ENCODE measurements at regions of chr2 and their contacts with region 1.

Region 1: DNA sequence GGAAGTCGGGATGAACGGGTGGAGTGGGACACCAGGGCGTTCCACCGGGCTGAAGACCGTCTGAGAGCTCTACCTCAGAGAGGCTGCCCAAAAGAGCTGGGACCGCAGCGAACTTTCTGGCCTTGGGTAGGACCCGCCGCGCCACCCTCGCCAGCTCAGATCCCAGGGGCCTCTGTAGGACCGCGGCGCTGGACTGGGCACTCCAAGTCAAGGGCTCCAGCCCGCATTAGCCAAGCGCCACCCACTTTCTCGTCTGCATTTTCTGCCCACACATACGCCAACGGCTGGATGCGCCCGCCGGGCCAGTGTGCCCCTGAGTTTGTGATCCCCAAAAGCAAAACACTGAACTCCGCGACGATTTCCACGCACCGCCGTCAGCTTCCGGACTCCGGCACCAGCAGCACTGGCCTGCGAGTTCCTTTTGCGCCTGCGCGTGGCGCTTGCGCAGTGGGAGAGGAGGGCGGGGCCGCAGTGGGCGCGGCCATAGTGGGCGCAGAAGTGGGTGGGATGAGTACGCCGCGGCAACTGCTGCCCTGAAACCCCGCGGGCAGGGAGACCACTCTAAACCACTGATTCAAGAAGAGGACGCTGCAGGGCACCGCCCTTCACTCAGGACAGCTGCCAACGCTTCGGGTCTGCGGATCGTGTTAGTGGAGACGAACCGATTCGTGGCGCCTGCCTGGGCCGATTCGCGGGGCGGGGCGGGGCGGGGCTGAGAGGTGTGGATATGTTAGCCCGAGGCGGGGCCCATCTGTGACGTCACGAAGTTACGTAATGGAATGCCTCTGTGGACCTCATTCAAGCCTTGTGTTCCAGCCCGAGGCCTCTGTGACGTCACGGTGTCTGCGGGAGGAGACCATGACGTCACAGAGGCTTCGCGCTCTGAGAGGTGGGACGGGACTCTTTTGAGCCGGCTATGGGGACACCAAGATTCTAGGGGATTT is 10.5 kb downstream of the OSR1 start:
- DNase-seq: peak; percentile 96
- H3K4me3 Mint-ChIP-seq: peak overlapping the region; percentile 91
- H3K27ac Mint-ChIP-seq: peak overlapping the region; percentile 91
- H3K4me1 Mint-ChIP-seq: peaks cover 21% of the 10 kb centered on the region
- H3K27me3 Mint-ChIP-seq: peaks cover 38% of the 10 kb centered on the region

Region 2: DNA sequence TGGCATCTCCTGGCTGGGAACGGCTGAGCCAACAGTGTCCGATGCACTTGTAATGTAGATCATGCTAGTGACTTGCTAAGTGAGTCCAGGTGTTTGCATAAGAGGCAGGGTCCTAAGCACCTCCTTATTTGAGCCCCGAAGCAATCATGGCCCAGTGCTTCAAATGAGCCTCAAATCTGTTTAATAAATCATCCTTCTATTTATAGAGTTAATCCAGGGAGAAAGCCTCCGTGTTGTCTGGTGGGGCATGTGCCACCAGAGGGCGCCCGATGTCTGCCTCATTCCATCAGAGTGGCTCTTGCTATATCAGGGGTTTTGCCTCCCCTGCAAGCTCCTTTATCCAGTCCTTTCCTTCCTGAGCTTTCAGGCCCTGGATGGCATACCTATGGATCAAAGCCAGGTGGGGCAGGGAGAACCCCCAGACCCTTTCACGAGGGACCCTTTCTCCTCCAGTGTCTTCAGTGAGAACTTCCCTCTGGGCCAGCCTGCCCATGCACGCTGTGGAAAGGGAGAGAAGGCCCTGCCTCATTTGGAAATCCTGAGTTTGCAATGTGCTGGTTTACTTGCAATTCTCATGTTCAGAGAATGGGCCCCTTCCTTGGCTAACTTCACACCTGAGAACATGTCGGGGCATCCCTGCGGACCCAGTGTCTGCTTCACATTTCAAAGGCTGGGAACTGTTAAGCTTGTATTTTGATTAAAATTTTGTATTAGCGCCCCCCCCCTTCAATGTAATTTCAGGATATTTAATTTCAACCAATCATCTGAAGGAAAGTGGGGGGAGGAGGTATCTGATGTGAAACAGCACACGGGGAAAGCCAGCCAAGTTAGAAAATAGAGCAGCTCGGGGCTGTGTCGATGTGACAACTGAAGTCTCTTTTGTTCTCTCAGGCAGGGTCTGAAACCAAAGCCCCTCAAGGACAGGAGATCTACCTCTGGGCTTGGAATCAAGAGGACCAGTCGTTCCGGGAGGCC is 827.2 kb before region 1 on chr2:
- CTCF ChIA-PET with region 1: no interaction called
- POLR2A ChIA-PET with region 1: no interaction called
- intact Hi-C with region 1: loop called (anchors 5 kb)
- DNase-seq: peak; percentile 77
- H3K4me3 Mint-ChIP-seq: no peak overlapping the region
- H3K27ac Mint-ChIP-seq: no peak overlapping the region
- H3K4me1 Mint-ChIP-seq: no peaks in the 10 kb centered on the region
- H3K27me3 Mint-ChIP-seq: peaks cover 21% of the 10 kb centered on the region

Region 3: GRCh38 chr2:19216676-19217602 is 131.0 kb before region 1 on chr2:
- CTCF ChIA-PET with region 1: no interaction called
- POLR2A ChIA-PET with region 1: no interaction called
- intact Hi-C with region 1: loop called (anchors 10 kb)
- DNase-seq: no peak
- H3K4me3 Mint-ChIP-seq: no peak overlapping the region
- H3K27ac Mint-ChIP-seq: no peak overlapping the region
- H3K4me1 Mint-ChIP-seq: no peaks in the 10 kb centered on the region
- H3K27me3 Mint-ChIP-seq: peaks cover 5% of the 10 kb centered on the region

Region 4: DNA sequence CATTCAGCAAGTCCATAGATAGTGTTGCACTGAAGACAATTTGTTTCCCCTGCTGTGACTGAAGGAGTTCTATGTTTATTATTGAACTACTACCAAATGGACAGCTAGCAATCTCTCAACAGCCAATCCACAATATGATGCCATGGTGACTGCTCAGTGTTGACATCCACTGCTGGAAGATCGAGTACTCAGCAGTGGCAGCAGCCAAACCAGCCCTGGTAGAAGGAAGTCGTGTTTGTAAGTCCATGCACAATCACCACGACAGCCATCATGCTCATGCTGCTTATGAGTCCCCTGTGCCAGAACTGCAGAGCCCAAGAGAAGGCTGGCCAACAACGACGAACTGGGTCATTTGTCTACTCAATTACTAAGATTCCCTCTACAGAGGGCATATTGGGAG is 55.9 kb before region 1 on chr2:
- CTCF ChIA-PET with region 1: no interaction called
- POLR2A ChIA-PET with region 1: no interaction called
- intact Hi-C with region 1: no loop called
- DNase-seq: no peak
- H3K4me3 Mint-ChIP-seq: no peak overlapping the region
- H3K27ac Mint-ChIP-seq: no peak overlapping the region
- H3K4me1 Mint-ChIP-seq: peaks cover 6% of the 10 kb centered on the region
- H3K27me3 Mint-ChIP-seq: no peaks in the 10 kb centered on the region

Region 5: DNA sequence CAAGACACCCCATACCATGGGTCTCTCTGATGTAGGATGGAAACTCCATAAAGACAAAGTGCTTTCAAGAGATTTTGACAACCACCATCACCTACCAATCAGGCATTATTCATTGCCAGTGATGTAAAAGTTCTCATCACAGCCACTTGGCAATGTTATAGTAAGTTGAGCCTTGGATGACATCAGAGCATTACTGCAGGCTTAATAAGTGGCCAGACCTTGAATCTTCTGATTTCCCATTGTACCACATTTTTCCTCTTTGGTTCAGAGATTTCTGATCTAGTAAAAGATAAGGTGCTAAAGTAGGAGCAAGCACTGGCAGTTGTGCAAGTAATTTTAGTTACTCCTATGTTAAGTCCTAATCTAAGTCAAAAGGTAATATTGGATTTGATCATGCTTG is 25.9 kb before region 1 on chr2:
- CTCF ChIA-PET with region 1: no interaction called
- POLR2A ChIA-PET with region 1: no interaction called
- intact Hi-C with region 1: no loop called
- DNase-seq: no peak
- H3K4me3 Mint-ChIP-seq: no peak overlapping the region
- H3K27ac Mint-ChIP-seq: no peak overlapping the region
- H3K4me1 Mint-ChIP-seq: no peaks in the 10 kb centered on the region
- H3K27me3 Mint-ChIP-seq: no peaks in the 10 kb centered on the region

Region 6: DNA sequence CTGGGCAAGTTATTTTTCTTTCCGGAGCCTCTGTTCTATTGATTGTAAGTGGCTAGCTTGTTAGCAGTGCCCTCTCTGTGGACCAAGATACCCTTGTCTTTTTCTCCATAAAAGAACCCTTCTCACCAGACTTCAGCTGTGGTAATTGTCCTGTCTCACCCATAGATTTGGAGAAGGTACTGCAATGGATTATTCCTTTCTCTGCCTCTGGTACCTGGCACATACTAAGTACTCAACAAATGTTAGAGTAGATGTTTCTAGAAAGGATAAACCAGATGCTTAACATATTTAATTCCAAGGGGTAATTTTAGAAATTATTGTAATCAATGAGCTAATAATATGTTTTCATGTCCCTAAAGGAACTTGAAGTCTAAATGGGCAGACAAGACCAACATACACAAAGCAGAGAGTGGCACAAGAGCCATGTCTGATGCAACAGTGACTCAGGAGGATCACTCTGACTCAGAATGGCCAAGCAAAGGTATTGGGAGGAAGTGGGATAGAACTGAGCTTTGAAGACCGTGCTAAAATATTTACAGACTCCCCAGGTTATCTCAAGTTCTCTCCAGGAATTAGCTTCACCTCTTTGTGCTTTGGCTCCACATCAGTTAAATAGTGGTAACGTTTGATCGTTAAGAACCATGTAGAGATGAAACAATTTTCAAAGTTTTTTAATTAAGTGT is 140.3 kb after region 1 on chr2:
- CTCF ChIA-PET with region 1: no interaction called
- POLR2A ChIA-PET with region 1: no interaction called
- intact Hi-C with region 1: loop called (anchors 1 kb)
- DNase-seq: peak; percentile 42
- H3K4me3 Mint-ChIP-seq: no peak overlapping the region
- H3K27ac Mint-ChIP-seq: no peak overlapping the region
- H3K4me1 Mint-ChIP-seq: peaks cover 10% of the 10 kb centered on the region
- H3K27me3 Mint-ChIP-seq: peaks cover 22% of the 10 kb centered on the region

Region 7: GRCh38 chr2:19643117-19643518 is 295.2 kb after region 1 on chr2:
- CTCF ChIA-PET with region 1: no interaction called
- POLR2A ChIA-PET with region 1: no interaction called
- intact Hi-C with region 1: no loop called
- DNase-seq: no peak
- H3K4me3 Mint-ChIP-seq: no peak overlapping the region
- H3K27ac Mint-ChIP-seq: no peak overlapping the region
- H3K4me1 Mint-ChIP-seq: no peaks in the 10 kb centered on the region
- H3K27me3 Mint-ChIP-seq: peaks cover 1% of the 10 kb centered on the region

Region 8: DNA sequence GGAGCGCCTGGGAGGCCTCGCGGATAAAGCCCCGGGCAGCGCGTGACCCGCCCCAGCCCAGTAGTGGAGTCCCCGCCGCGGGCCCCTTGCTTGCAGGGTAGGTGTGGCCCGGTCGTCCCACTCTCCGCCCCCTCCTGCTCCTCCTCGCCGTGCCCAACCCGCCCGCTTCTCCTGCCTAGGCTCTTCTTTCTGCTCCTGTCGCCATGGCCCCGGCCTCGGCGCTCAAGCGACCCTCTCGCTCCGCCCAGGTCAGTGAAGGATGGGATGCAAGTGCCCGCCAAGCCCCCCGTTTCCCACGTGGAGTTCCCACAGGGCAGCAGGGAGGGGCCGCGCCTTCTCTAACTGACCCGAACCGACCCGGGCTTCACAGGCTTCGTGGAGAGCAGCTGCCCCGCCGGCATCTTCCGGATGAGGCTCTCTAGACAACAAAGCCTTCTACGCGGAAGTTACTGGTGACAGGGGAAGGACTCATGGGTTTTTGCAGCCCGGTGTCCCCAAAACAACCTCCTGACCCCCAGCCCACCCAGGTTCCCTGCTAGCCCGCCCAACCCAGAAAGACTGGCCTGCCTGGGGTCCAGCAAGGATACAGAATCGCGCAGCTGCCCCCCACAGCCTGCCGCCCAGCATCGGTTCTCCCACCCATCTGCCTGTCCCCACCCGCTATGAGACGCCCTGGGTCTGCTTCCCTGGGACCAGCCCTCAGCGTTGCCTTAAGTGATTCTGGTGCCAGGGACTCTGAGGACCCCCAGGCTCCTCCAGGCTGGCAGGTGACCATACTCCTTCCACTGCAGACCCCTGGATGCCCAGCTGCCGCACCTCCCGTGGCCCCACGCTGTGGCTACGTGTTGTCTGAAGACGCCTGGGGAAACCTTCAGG is 521.1 kb after region 1 on chr2:
- CTCF ChIA-PET with region 1: interaction called, 3 read pairs
- POLR2A ChIA-PET with region 1: no interaction called
- intact Hi-C with region 1: loop called (anchors 2 kb)
- DNase-seq: peak; percentile 70
- H3K4me3 Mint-ChIP-seq: peak overlapping the region; percentile 84
- H3K27ac Mint-ChIP-seq: peak overlapping the region; percentile 75
- H3K4me1 Mint-ChIP-seq: peaks cover 21% of the 10 kb centered on the region
- H3K27me3 Mint-ChIP-seq: no peaks in the 10 kb centered on the region

Region 9: DNA sequence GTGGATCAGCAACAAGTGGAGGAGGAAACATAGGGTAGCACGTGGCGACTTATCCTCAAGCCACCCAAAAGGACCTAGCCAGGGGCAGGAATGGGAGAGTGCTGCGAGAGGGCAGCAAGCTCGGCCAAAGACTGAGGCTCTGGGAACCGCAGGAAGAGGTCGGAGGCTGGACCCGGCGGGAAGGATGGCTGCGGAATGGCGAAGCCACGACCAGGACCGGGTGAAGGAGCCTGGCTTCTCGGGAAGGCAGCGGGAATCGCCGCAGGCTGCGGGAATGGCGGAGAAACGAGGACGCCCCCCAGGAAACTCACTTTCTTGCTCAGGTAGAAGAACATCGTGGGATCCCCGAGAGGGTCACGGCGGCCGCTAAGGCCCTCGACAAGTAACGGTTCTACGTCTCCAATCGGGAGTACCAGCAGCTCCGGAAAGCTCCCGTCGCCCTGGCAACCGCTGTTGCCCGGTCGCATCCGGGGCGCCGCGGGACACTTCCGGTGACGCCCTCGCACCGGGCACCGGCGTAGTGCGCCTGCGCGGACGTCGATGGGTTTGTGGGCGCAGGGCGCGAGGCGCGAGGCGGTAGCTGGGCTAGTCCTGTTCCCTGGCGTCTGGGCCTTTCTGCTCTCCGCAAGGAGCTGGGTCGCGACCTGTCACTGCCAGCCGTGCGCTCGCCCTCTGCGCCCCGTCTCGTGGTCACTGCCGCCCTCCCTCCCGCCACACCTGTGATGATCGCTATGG is 642.0 kb after region 1 on chr2 and contains the start of gene WDR35:
- CTCF ChIA-PET with region 1: no interaction called
- POLR2A ChIA-PET with region 1: no interaction called
- intact Hi-C with region 1: loop called (anchors 5 kb)
- DNase-seq: peak; percentile 94
- H3K4me3 Mint-ChIP-seq: peak within 1 kb of the TSS; percentile 90
- H3K27ac Mint-ChIP-seq: peak within 1 kb of the TSS; percentile 74
- H3K4me1 Mint-ChIP-seq: peaks cover 23% of the 10 kb centered on the region
- H3K27me3 Mint-ChIP-seq: peaks cover 9% of the 10 kb centered on the region
- total RNA-seq, gene WDR35: 6.0 to 7.1 TPM

Region 10: DNA sequence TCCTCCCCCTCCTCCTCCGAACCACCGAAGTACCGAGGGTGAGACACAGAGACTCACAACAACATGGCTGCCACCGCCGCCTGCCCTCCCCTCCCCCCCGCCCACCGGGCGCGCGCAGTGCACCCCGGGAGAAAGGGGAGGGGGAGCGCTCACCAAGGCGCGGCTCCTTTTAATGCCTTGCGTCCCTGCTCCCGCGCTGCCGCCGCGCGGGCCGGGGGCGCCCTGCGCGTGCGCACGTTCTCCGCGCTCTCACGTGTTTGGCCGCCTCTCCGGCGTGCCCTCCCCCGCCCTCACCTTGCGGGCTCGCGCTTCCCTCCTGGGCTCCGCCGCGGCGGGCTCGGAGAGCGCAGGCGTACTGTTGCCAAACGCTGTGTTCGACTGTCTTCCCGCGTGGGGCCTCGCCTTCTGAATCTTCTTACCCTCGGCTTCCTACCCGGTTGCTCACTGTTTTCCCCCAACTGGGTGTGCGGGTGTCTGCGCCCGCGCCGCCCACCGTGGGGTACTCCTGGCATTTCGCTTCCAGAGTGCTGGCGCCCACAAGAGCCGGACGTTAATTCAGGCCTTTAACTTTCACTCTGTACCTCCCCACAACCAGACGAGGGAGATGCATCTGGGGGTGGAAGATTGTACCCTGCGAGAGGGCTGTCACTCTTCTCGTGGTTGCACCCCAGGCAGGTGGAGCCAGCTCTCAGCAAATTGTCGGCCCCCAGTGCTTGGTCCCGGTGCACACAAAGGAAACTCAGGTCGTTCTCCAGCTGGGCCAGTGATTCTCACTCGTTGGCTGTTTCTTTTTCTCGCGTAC is 1003.1 kb after region 1 on chr2 and contains the start of gene PUM2:
- CTCF ChIA-PET with region 1: no interaction called
- POLR2A ChIA-PET with region 1: no interaction called
- intact Hi-C with region 1: loop called (anchors 5 kb)
- DNase-seq: peak; percentile 97
- H3K4me3 Mint-ChIP-seq: no peak within 1 kb of the TSS
- H3K27ac Mint-ChIP-seq: peak within 1 kb of the TSS; percentile 93
- H3K4me1 Mint-ChIP-seq: peaks cover 31% of the 10 kb centered on the region
- H3K27me3 Mint-ChIP-seq: no peaks in the 10 kb centered on the region
- total RNA-seq, gene PUM2: 122 TPM

Measured in activated CD4-positive, alpha-beta memory T cell treated with anti-CD3 and anti-CD28 coated beads for 36 hours (primary cell).